Activated CD4-positive, alpha-beta memory T cell treated with anti-CD3 and anti-CD28 coated beads for 36 hours (primary cell): ENCODE measurements at regions of chr20 and their contacts with region 1.

Region 1: DNA sequence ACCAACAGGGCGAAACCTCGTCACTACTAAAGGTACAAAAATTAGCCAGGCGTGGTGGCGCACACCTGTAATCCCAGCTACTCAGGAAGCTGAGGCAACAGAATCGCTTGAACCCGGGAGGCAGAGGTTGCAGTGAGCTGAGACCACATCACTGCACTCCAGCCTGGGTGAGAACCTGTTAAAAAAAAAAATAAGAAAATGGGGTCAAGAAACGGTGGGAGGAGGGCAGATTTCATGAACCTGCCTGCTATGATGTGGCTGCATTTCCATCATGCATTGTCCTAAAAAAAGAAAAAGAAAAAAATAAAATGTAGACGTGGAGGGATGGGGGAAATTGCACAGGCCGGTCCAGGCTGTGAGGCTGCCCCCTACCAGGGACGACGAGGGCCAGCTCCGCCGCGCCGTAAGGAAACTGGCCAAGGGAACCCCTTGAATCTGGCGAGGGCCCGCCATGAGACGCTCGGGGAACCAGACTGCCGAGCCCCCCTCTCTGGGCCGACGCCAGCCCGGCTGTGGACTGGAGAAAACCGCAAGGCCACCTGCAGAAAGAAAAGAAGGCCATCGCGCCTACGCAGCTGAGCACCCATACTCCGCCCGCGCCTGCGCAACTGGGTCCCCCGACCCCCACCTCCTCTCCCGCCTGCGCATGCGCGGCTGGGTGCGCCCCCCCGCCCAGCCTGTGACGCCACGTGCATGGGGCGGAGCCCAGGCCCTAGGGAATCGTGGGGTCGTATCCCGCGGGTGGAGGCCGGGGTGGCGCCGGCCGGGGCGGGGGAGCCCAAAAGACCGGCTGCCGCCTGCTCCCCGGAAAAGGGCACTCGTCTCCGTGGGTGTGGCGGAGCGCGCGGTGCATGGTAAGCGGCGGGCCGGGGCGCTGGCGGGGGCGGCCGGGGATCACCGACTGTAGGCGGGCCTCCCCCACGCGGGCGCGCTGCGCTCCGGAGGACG is at the start of gene ENTPD6:
- DNase-seq: peak; percentile 93
- H3K4me3 Mint-ChIP-seq: peak within 1 kb of the TSS; percentile 89
- H3K27ac Mint-ChIP-seq: peak within 1 kb of the TSS; percentile 73
- H3K4me1 Mint-ChIP-seq: peaks cover 40% of the 10 kb centered on the region
- H3K27me3 Mint-ChIP-seq: no peaks in the 10 kb centered on the region
- total RNA-seq, gene ENTPD6: 48.5 to 51.0 TPM

Region 2: GRCh38 chr20:25148181-25148981 is 46.9 kb before region 1 on chr20:
- CTCF ChIA-PET with region 1: no interaction called
- POLR2A ChIA-PET with region 1: no interaction called
- intact Hi-C with region 1: loop called (anchors 5 kb)
- DNase-seq: peak; percentile 75
- H3K4me3 Mint-ChIP-seq: peak overlapping the region; percentile 78
- H3K27ac Mint-ChIP-seq: no peak overlapping the region
- H3K4me1 Mint-ChIP-seq: peaks cover 6% of the 10 kb centered on the region
- H3K27me3 Mint-ChIP-seq: peaks cover 9% of the 10 kb centered on the region

Region 3: GRCh38 chr20:25247956-25248785 is 52.9 kb after region 1 on chr20 and contains the start of gene PYGB:
- CTCF ChIA-PET with region 1: interaction called, 5 read pairs
- POLR2A ChIA-PET with region 1: no interaction called
- intact Hi-C with region 1: loop called (anchors 1 kb)
- DNase-seq: peak; percentile 81
- H3K4me3 Mint-ChIP-seq: peak within 1 kb of the TSS; percentile 91
- H3K27ac Mint-ChIP-seq: peak within 1 kb of the TSS; percentile 88
- H3K4me1 Mint-ChIP-seq: peaks cover 50% of the 10 kb centered on the region
- H3K27me3 Mint-ChIP-seq: no peaks in the 10 kb centered on the region
- total RNA-seq, gene PYGB: 23.4 to 24.0 TPM

Region 4: DNA sequence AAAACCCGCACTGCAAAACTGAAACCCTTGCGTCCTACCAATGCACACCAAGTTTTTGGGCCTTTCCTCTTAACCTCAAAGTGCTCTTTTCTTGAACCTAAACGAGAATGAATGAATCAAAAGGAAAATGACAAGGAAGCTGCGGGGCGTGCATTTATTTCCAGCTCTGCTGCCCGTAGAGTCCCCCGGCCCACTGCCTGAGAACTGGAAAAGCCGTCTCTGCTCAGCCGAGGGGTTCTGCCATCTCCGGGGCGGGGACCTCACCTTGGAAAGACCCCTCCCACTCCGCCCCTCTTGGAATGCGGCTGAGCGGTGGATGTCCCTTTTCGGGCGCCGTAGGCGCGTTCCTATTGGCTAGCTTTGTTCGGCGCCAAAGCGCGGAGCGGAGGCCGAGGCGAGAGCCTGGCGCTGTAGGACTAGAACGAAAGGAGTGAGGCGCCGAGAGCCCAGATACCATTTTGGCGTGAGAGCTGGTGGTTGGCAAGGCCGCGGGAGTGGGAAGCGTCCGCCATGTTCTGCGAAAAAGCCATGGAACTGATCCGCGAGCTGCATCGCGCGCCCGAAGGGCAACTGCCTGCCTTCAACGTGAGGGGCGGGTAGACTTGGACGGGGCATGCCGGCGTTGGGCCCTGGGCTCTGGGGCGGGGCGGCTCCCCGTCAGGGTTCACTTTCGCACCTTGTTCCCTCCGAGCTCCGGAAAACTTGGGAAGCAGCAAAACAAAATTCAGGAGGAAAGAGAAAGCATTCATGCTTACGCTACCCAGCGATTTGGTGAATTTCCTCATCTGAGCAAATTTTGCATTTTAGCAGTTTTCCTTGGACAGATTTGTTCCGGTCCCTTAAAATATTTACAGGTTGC is 212.3 kb after region 1 on chr20 and contains the start of gene GINS1:
- CTCF ChIA-PET with region 1: no interaction called
- POLR2A ChIA-PET with region 1: no interaction called
- intact Hi-C with region 1: loop called (anchors 5 kb)
- DNase-seq: peak; percentile 92
- H3K4me3 Mint-ChIP-seq: peak within 1 kb of the TSS; percentile 88
- H3K27ac Mint-ChIP-seq: peak within 1 kb of the TSS; percentile 85
- H3K4me1 Mint-ChIP-seq: peaks cover 17% of the 10 kb centered on the region
- H3K27me3 Mint-ChIP-seq: no peaks in the 10 kb centered on the region
- total RNA-seq, gene GINS1: 31.5 to 32.3 TPM